MCF 10A (cell line): ENCODE measurements at regions of chr16 and their contacts with region 1.

Region 1: GRCh38 chr16:60755907-60756306 is 1280.3 kb downstream of the CDH8 start:
- DNase-seq: no peak
- H3K4me3 Mint-ChIP-seq: no peak overlapping the region
- H3K27ac Mint-ChIP-seq: no peak overlapping the region
- H3K4me1 Mint-ChIP-seq: no peaks in the 10 kb centered on the region
- H3K27me3 Mint-ChIP-seq: no peaks in the 10 kb centered on the region
- CTCF ChIP-seq: peak; percentile 40

Region 2: GRCh38 chr16:58814348-58814801 is 1941.5 kb before region 1 on chr16:
- CTCF ChIA-PET with region 1: interaction called, 10 read pairs
- POLR2A ChIA-PET with region 1: no interaction called
- intact Hi-C with region 1: no loop called
- DNase-seq: peak; percentile 49
- H3K4me3 Mint-ChIP-seq: peak overlapping the region; percentile 55
- H3K27ac Mint-ChIP-seq: no peak overlapping the region
- H3K4me1 Mint-ChIP-seq: peaks cover 8% of the 10 kb centered on the region
- H3K27me3 Mint-ChIP-seq: no peaks in the 10 kb centered on the region
- CTCF ChIP-seq: peak; percentile 86

Region 3: DNA sequence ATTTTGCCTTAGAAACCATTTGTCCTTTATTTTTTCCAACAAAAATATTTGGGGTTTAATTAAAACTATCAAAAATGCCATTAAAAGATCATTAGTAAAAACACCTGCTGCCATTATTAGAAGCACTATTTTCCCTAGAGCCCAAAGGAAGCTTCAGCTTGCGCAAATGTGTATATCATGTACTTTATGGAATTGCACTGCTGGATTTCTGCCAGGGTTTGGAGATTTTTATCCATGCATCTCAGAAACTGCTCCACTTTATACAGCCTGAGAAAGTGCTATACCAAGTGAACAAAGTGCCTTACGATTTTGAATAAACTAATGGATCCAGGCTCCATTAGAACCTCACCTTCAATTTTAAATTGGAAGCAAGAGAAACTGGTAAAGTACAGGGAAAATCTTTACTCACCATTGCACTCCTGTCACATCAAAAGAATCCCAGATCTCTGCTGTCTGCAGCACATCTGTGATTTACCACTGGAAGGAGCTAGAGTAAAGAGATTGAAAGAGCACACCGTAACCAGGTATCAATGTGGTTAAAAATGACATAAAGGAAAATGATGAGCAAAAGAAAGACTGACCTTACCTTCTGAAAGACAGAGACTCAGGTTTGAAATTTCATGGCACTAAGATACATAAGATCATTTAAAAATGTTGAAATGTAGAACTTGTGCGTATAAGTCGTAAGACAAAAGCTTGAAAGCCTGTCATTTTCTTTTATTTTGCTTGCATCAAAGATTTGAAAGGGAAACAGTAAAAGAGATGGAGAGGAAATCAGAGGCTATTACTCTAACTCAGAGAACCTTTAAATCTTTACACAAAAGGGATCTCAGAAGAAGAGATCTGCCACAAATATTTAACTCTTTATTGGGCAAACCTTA is 1343.7 kb before region 1 on chr16:
- CTCF ChIA-PET with region 1: no interaction called
- POLR2A ChIA-PET with region 1: interaction called, 3 read pairs
- intact Hi-C with region 1: loop called (anchors 1 kb)
- DNase-seq: peak; percentile 9
- H3K4me3 Mint-ChIP-seq: no peak overlapping the region
- H3K27ac Mint-ChIP-seq: no peak overlapping the region
- H3K4me1 Mint-ChIP-seq: no peaks in the 10 kb centered on the region
- H3K27me3 Mint-ChIP-seq: no peaks in the 10 kb centered on the region
- CTCF ChIP-seq: peak; percentile 68

Region 4: GRCh38 chr16:59593194-59593661 is 1162.7 kb before region 1 on chr16:
- CTCF ChIA-PET with region 1: no interaction called
- POLR2A ChIA-PET with region 1: no interaction called
- intact Hi-C with region 1: loop called (anchors 5 kb)
- DNase-seq: peak; percentile 50
- H3K4me3 Mint-ChIP-seq: peak overlapping the region; percentile 55
- H3K27ac Mint-ChIP-seq: no peak overlapping the region
- H3K4me1 Mint-ChIP-seq: peaks cover 18% of the 10 kb centered on the region
- H3K27me3 Mint-ChIP-seq: no peaks in the 10 kb centered on the region
- CTCF ChIP-seq: no peak